ENCODE measurements at regions of chr17 and their contacts with region 1.

Region 1: DNA sequence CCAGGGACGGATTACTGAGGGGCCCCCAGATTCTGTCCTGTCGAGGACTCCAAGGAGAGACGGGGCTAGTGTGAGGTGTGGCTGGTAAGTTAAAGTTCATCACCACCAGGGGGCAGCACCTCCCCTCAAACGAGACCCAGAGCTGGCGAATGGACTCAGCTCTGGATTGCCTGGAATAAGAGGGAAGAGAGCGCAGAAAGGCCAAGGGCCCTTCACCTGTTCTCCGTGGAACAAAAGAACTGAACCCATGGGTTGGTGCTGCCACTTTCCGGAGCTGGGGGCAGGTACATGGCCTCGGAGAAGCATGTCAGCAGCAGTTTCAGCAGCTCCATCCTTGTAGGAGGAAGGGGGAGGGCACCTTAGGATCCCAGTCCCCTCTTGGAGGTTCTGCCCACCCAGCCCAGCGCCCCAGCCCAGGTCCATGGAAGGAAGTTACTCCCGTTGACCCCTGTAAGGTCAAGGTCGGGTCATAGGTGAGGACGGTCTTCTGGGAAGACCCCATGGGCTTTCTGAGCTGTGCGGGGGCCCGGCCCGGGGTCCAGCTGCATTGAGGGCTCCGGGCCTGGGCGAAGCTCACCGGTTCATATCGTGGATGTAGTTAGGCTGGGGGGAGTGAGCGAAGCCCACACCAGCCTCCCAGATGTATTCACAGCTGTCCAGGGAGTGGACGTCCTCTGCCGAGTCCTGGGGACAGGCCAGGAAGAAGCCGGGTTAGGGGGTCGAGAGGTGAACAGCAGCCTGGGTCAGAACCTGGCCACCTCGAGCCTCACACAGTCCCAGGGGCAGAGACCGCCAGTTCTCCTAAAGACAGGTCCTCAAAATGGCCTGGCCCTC is 10.7 kb downstream of the HID1 start:
- DNase-seq: peak; percentile 91
- ATAC-seq: peak; percentile 86 to 91

Region 2: GRCh38 chr17:74798239-74798707 is 163.6 kb before region 1 on chr17:
- intact Hi-C with region 1: loop called (anchors 10 kb)
- DNase-seq: no peak
- ATAC-seq: no peak

Region 3: GRCh38 chr17:74923533-74924249 is 38.2 kb before region 1 on chr17:
- intact Hi-C with region 1: loop called in 1 of 2 experiments (anchors 1 kb)
- DNase-seq: peak; percentile 82
- ATAC-seq: peak; percentile 41 to 70

Region 4: DNA sequence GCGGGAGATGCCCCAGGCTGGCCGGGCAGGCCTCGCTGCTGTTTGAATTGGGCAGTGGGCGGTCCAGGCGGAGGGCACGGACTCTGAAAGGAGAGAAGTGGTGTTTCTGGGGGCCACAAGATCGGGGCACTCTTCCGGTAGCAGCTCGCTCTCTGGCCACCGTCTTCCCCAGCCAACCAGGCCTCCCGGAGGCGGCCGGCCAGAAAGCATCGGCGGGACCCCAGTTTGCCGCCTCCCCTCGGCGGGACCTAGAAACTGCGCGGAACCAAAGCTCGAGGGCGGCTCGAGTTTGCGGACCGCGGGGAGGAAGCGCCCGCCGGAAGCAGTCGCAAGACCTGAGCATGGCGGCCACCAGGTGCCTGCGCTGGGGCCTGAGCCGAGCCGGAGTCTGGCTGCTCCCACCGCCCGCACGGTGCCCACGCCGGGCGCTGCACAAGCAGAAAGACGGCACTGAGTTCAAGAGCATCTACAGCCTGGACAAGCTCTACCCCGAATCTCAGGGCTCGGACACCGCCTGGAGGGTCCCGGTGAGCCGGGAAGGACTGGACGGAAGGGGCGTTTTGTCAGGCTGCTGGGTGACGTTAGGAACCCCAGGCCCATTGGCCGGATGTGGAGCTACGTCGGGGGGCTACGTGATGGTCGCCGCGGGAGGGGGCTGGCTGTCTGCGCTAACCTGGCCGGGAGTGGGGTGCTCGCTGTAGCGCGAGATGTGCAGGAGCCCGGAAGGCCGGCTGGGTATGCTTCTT is 50.6 kb after region 1 on chr17 and contains the start of gene MRPL58:
- intact Hi-C with region 1: loop called (anchors 5 to 10 kb)
- DNase-seq: peak; percentile 88
- ATAC-seq: peak; percentile 95
- total RNA-seq, gene MRPL58: 38.1 to 46.7 TPM

Region 5: GRCh38 chr17:75199886-75200618 is 238.2 kb after region 1 on chr17:
- intact Hi-C with region 1: loop called (anchors 5 to 10 kb)
- DNase-seq: no peak
- ATAC-seq: no peak

Region 6: DNA sequence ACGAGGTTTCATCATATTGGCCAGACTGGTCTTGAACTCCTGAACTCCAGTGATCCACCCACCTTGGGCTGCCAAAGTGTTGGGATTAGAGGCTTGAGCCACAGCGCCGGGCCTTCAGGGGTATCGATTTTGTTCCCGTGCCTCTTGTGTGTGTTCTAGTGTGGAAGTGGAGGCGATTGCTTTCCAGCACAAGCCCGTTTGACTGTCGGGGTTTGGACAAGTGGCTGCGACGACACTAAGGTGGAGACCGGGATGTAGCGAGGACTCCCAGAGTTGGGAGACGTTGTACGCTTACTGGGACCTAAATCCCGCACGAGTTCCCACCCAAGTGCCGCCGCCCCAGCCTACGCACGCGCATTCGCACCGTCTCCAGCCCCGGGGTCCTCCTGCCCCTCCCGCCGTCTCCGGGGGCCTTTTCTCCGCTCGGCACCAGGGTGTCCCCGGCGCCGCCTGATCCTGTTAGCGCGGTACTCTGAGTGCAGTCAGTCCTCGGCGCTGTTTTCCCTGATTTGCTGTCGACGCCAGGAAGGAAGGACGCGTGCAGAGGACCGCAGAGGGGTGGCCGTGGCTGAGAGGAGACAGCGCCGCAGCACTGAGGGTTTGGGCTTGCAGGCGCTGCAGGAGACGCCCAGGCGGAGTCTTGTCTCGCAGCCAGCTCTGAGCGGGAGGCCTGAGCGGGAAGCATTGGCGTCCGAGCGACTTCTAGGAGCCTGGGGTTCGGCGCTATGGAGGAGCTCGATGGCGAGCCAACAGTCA is 243.3 kb after region 1 on chr17 and contains the start of gene NUP85:
- intact Hi-C with region 1: loop called (anchors 5 to 10 kb)
- DNase-seq: peak; percentile 95
- ATAC-seq: peak; percentile 95 to 96
- total RNA-seq, gene NUP85: 28.6 to 37.9 TPM

Measured in left cardiac atrium (tissue), 4 donors.